CD4-positive, alpha-beta memory T cell (primary cell): ENCODE measurements at regions of chr15 and their contacts with region 1.

Region 1: GRCh38 chr15:69468241-69469121 is 15.9 kb downstream of the RPLP1 start:
- DNase-seq: peak; percentile 90 to 98 (median 94)
- H3K4me3 ChIP-seq: peak overlapping the region in 1 of 2 donors; percentile 34
- H3K4me3 Mint-ChIP-seq: peak overlapping the region; percentile 50 to 87 (median 78)
- H3K27ac ChIP-seq: peak overlapping the region; percentile 90
- H3K27ac Mint-ChIP-seq: peak overlapping the region; percentile 97 to 100 (median 100)
- H3K4me1 ChIP-seq: peaks cover 41% of the 10 kb centered on the region
- H3K4me1 Mint-ChIP-seq: peaks cover 22 to 50% (median 29%) of the 10 kb centered on the region in 4 donors
- H3K27me3 ChIP-seq: no peaks in the 10 kb centered on the region
- H3K27me3 Mint-ChIP-seq: no peaks in the 10 kb centered on the region

Region 2: GRCh38 chr15:69160141-69160993 is 308.1 kb before region 1 on chr15 and contains the start of gene GLCE:
- CTCF ChIA-PET with region 1: interaction called, 3 read pairs
- POLR2A ChIA-PET with region 1: interaction called, 3 read pairs
- intact Hi-C with region 1: loop called (anchors 5 kb)
- DNase-seq: peak; percentile 92 to 96 (median 94)
- H3K4me3 ChIP-seq: peak within 1 kb of the TSS; percentile 53 to 70
- H3K4me3 Mint-ChIP-seq: peak within 1 kb of the TSS; percentile 94 to 99 (median 97)
- H3K27ac ChIP-seq: peak within 1 kb of the TSS; percentile 65
- H3K27ac Mint-ChIP-seq: peak within 1 kb of the TSS; percentile 86 to 97 (median 95)
- H3K4me1 ChIP-seq: peaks cover 14% of the 10 kb centered on the region
- H3K4me1 Mint-ChIP-seq: peaks cover 18 to 32% (median 23%) of the 10 kb centered on the region in 4 donors
- H3K27me3 ChIP-seq: no peaks in the 10 kb centered on the region
- H3K27me3 Mint-ChIP-seq: peaks cover 0 to 8% of the 10 kb centered on the region in 2 donors
- total RNA-seq, gene GLCE: 7.2 TPM

Region 3: GRCh38 chr15:69413822-69414700 is 54.4 kb before region 1 on chr15 and contains the start of gene KIF23:
- CTCF ChIA-PET with region 1: interaction called, 8 read pairs
- POLR2A ChIA-PET with region 1: interaction called, 13 read pairs
- intact Hi-C with region 1: loop called (anchors 5 kb)
- DNase-seq: peak; percentile 90 to 95 (median 91)
- H3K4me3 ChIP-seq: peak within 1 kb of the TSS in 1 of 2 donors; percentile 58
- H3K4me3 Mint-ChIP-seq: peak within 1 kb of the TSS; percentile 85 to 93 (median 86)
- H3K27ac ChIP-seq: peak within 1 kb of the TSS; percentile 37
- H3K27ac Mint-ChIP-seq: peak within 1 kb of the TSS; percentile 48 to 91 (median 74)
- H3K4me1 ChIP-seq: peaks cover 8% of the 10 kb centered on the region
- H3K4me1 Mint-ChIP-seq: peaks cover 6 to 15% (median 12%) of the 10 kb centered on the region in 4 donors
- H3K27me3 ChIP-seq: no peaks in the 10 kb centered on the region
- H3K27me3 Mint-ChIP-seq: peaks cover 5 to 17% of the 10 kb centered on the region in 2 donors
- total RNA-seq, gene KIF23: 0.20 TPM in 1 of 2 experiments, not detected in the other

Region 4: GRCh38 chr15:69648212-69648611 is 179.7 kb after region 1 on chr15:
- CTCF ChIA-PET with region 1: no interaction called
- POLR2A ChIA-PET with region 1: no interaction called
- intact Hi-C with region 1: no loop called
- DNase-seq: no peak
- H3K4me3 ChIP-seq: no peak overlapping the region
- H3K4me3 Mint-ChIP-seq: peak overlapping the region in 2 of 8 donors; percentile 35 to 41
- H3K27ac ChIP-seq: no peak overlapping the region
- H3K27ac Mint-ChIP-seq: peak overlapping the region in 1 of 7 donors; percentile 31
- H3K4me1 ChIP-seq: no peaks in the 10 kb centered on the region
- H3K4me1 Mint-ChIP-seq: peaks cover 8 to 18% (median 12%) of the 10 kb centered on the region in 4 donors
- H3K27me3 ChIP-seq: no peaks in the 10 kb centered on the region
- H3K27me3 Mint-ChIP-seq: no peaks in the 10 kb centered on the region

Region 5: GRCh38 chr15:69713726-69714559 is 245.5 kb after region 1 on chr15:
- CTCF ChIA-PET with region 1: no interaction called
- POLR2A ChIA-PET with region 1: interaction called, 3 read pairs
- intact Hi-C with region 1: loop called (anchors 1 kb)
- DNase-seq: peak; percentile 80 to 92 (median 85)
- H3K4me3 ChIP-seq: no peak overlapping the region
- H3K4me3 Mint-ChIP-seq: peak overlapping the region; percentile 54 to 88 (median 73)
- H3K27ac ChIP-seq: peak overlapping the region; percentile 11
- H3K27ac Mint-ChIP-seq: peak overlapping the region; percentile 81 to 95 (median 90)
- H3K4me1 ChIP-seq: peaks cover 73% of the 10 kb centered on the region
- H3K4me1 Mint-ChIP-seq: peaks cover 47 to 76% (median 64%) of the 10 kb centered on the region in 4 donors
- H3K27me3 ChIP-seq: no peaks in the 10 kb centered on the region
- H3K27me3 Mint-ChIP-seq: no peaks in the 10 kb centered on the region

Region 6: DNA sequence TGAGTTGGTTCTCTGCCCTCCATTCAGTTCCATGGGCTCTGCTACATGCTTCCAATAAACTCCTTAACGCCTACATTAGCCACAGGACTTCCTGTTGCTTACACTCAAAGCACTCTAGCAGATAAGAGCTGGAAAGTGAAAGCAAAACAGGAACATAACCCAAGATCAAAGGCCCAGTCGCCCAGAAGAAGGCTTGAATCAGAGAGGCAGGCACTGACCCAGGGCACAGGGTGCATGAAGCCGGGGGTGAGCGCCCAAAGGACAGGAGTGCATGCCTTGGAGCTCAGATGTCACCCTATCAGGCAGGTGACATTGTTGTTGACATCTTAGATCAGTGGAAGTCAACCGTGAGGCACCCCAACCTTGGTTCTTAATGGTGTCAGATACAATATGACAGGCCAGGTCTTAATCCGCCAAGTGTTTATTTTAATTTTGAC is 1059.8 kb after region 1 on chr15:
- CTCF ChIA-PET with region 1: no interaction called
- POLR2A ChIA-PET with region 1: interaction called, 12 read pairs
- intact Hi-C with region 1: no loop called
- DNase-seq: peak; percentile 74 to 80 (median 77)
- H3K4me3 ChIP-seq: peak overlapping the region; percentile 8 to 39
- H3K4me3 Mint-ChIP-seq: peak overlapping the region; percentile 69 to 85 (median 76)
- H3K27ac ChIP-seq: peak overlapping the region; percentile 32
- H3K27ac Mint-ChIP-seq: peak overlapping the region; percentile 74 to 97 (median 88)
- H3K4me1 ChIP-seq: peaks cover 56% of the 10 kb centered on the region
- H3K4me1 Mint-ChIP-seq: peaks cover 45 to 79% (median 61%) of the 10 kb centered on the region in 4 donors
- H3K27me3 ChIP-seq: no peaks in the 10 kb centered on the region
- H3K27me3 Mint-ChIP-seq: no peaks in the 10 kb centered on the region